Endothelial cell of umbilical vein (primary cell): ENCODE measurements at regions of chr1 and their contacts with region 1.

Region 1: GRCh38 chr1:168082008-168082876 is 54.5 kb downstream of the GPR161 start:
- DNase-seq: peak; percentile 81
- H3K4me3 ChIP-seq: no peak overlapping the region
- H3K27ac ChIP-seq: peak overlapping the region; percentile 23
- H3K4me1 ChIP-seq: peaks cover 5% of the 10 kb centered on the region
- H3K27me3 ChIP-seq: no peaks in the 10 kb centered on the region
- CTCF ChIP-seq: peak; percentile 94 to 96
- POLR2A ChIP-seq: no peak

Region 2: GRCh38 chr1:167152192-167152876 is 929.9 kb before region 1 on chr1:
- CTCF ChIA-PET with region 1: no interaction called
- POLR2A ChIA-PET with region 1: no interaction called
- dilution Hi-C with region 1: no loop called
- intact Hi-C with region 1: no loop called
- DNase-seq: no peak
- H3K4me3 ChIP-seq: no peak overlapping the region
- H3K27ac ChIP-seq: no peak overlapping the region
- H3K4me1 ChIP-seq: no peaks in the 10 kb centered on the region
- H3K27me3 ChIP-seq: peaks cover 0 to 1% of the 10 kb centered on the region in 2 experiments
- CTCF ChIP-seq: no peak
- POLR2A ChIP-seq: no peak

Region 3: GRCh38 chr1:167599957-167600581 is 482.2 kb before region 1 on chr1:
- CTCF ChIA-PET with region 1: interaction called, 14 read pairs
- POLR2A ChIA-PET with region 1: no interaction called
- dilution Hi-C with region 1: no loop called
- intact Hi-C with region 1: loop called (anchors 2 kb)
- DNase-seq: peak; percentile 40
- H3K4me3 ChIP-seq: no peak overlapping the region
- H3K27ac ChIP-seq: no peak overlapping the region
- H3K4me1 ChIP-seq: no peaks in the 10 kb centered on the region
- H3K27me3 ChIP-seq: no peaks in the 10 kb centered on the region
- CTCF ChIP-seq: peak in 1 of 2 donors; percentile 29
- POLR2A ChIP-seq: no peak

Region 4: DNA sequence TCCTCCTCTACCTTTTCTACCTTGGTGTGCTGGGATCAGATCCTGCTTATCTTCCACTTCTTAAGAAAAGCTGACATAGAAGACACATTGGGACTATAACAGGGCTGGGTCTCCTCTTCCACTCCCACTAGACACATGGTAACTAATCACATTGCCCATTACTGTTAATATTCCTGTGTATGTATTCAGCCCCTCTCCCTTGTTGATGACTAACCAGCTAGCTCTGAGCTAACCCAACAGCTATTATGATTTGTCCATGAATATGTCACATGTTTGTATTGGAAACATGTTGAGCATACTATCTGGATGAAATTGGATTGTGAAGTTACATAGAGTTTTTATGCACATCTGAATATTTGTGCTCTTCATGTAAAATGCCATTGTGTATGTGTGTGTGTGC is 307.5 kb before region 1 on chr1:
- CTCF ChIA-PET with region 1: interaction called, 10 read pairs
- POLR2A ChIA-PET with region 1: no interaction called
- dilution Hi-C with region 1: no loop called
- intact Hi-C with region 1: no loop called
- DNase-seq: peak; percentile 58
- H3K4me3 ChIP-seq: no peak overlapping the region
- H3K27ac ChIP-seq: peak overlapping the region; percentile 13
- H3K4me1 ChIP-seq: peaks cover 20% of the 10 kb centered on the region
- H3K27me3 ChIP-seq: no peaks in the 10 kb centered on the region
- CTCF ChIP-seq: no peak
- POLR2A ChIP-seq: no peak

Region 5: DNA sequence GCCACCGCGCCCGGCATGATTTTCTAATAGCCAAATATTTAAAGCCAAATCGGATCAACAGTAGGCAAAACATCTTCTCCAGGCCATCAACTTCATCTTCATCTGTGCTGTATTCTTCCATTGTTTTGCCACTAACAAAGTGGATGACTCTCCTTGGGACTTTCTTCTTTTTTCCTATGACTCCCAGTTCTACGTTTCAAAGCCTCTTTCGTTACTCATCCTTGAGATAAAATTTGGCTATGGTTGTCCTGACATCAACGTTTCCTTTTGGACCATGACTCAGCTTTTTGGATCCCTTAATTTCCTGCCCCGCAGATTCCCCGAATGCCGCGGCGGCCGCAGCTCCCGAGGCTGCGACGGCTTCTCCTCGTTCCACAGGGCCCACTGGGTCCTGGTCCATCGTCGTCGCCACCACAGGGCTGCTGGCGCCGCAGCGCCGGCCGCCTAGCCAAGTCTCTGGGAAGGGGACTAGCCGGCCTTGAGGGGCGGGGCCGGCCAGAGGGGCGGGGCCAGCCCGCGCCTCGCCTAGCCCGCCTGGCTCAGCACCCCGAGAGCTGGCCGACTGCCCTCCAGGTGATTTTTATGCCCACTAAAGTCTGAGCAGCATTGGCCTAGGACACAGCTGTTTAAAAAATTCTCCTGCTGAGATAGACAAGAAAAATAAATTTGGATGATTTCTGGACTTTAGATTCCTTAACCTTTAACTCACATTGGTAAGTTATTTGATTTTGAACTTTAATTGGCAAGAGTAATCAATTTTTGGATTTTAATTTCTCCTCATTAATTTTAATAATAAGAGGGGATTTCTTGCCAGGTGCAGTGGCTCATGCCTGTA is 262.2 kb before region 1 on chr1:
- CTCF ChIA-PET with region 1: interaction called, 4 read pairs
- POLR2A ChIA-PET with region 1: no interaction called
- dilution Hi-C with region 1: no loop called
- intact Hi-C with region 1: loop called (anchors 5 kb)
- DNase-seq: peak; percentile 82
- H3K4me3 ChIP-seq: peak overlapping the region in 1 of 3 experiments; percentile 16
- H3K27ac ChIP-seq: peak overlapping the region; percentile 69
- H3K4me1 ChIP-seq: peaks cover 7% of the 10 kb centered on the region
- H3K27me3 ChIP-seq: no peaks in the 10 kb centered on the region
- CTCF ChIP-seq: no peak
- POLR2A ChIP-seq: no peak

Region 6: DNA sequence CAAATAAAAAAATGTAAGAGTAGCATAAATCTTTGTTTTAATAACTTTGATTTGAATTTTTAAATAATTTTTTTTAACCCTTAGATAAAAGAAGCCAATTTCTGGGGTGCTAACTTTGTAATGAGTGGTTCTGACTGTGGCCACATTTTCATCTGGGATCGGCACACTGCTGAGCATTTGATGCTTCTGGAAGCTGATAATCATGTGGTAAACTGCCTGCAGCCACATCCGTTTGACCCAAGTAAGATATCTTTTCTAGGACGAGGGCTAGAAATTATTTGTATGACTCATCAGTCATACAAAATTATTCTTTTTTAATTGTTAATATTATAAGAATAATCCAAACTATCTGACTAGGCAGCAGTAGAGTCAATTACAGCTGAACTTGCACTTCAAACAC is 16.7 kb before region 1 on chr1:
- CTCF ChIA-PET with region 1: interaction called, 15 read pairs
- POLR2A ChIA-PET with region 1: no interaction called
- dilution Hi-C with region 1: no loop called
- intact Hi-C with region 1: no loop called
- DNase-seq: no peak
- H3K4me3 ChIP-seq: no peak overlapping the region
- H3K27ac ChIP-seq: no peak overlapping the region
- H3K4me1 ChIP-seq: no peaks in the 10 kb centered on the region
- H3K27me3 ChIP-seq: no peaks in the 10 kb centered on the region
- CTCF ChIP-seq: no peak
- POLR2A ChIP-seq: no peak

Region 7: GRCh38 chr1:168136709-168137514 is 54.7 kb after region 1 on chr1 and contains the start of gene GPR161:
- CTCF ChIA-PET with region 1: interaction called, 8 read pairs
- POLR2A ChIA-PET with region 1: no interaction called
- dilution Hi-C with region 1: no loop called
- intact Hi-C with region 1: loop called (anchors 5 kb)
- DNase-seq: peak; percentile 63
- H3K4me3 ChIP-seq: peak within 1 kb of the TSS; percentile 73 to 92 (median 77)
- H3K27ac ChIP-seq: peak within 1 kb of the TSS; percentile 44
- H3K4me1 ChIP-seq: peaks cover 19% of the 10 kb centered on the region
- H3K27me3 ChIP-seq: no peaks in the 10 kb centered on the region
- CTCF ChIP-seq: no peak
- POLR2A ChIP-seq: peak; percentile 69
- total RNA-seq, gene GPR161: 34.8 and 36.5 TPM in 2 replicates